Dendritic cell treated with granulocyte-macrophage colony-stimulating factor and Interleukin-4, amounts not matched to agents 40 ng/mL and 50 ng/mL, for 4 days (primary cell): ENCODE measurements at regions of chr14 and their contacts with region 1.

Region 1: DNA sequence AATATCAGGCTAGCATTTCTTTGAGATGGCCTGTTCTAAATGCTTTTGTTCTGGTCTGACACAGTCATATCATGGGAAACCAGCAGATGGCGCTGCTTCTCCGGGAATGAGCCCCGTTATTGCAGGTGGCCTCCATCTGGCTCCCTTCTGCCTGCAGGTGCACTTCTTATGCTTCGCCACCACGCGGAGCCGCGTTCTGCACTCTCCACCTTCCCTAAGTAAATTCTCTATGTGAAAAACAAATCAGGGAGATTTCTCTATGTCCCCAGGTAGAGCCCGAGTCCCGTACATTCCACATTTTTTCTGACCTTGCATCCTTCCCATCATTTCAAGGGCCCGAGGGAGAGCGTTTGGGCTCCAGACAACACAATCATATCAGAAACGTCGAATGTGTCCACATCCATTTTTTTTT is 26.2 kb downstream of the GLRX5 start:
- H3K4me3 Mint-ChIP-seq: no peak overlapping the region
- H3K27ac Mint-ChIP-seq: no peak overlapping the region
- H3K4me1 Mint-ChIP-seq: no peaks in the 10 kb centered on the region
- H3K27me3 Mint-ChIP-seq: peaks cover 12% of the 10 kb centered on the region

Region 2: GRCh38 chr14:95683793-95684192 is 122.8 kb after region 1 on chr14:
- intact Hi-C with region 1: loop called (anchors 5 kb)
- H3K4me3 Mint-ChIP-seq: no peak overlapping the region
- H3K27ac Mint-ChIP-seq: no peak overlapping the region
- H3K4me1 Mint-ChIP-seq: no peaks in the 10 kb centered on the region
- H3K27me3 Mint-ChIP-seq: no peaks in the 10 kb centered on the region

Region 3: GRCh38 chr14:95759941-95760340 is 198.9 kb after region 1 on chr14:
- intact Hi-C with region 1: no loop called
- H3K4me3 Mint-ChIP-seq: no peak overlapping the region
- H3K27ac Mint-ChIP-seq: no peak overlapping the region
- H3K4me1 Mint-ChIP-seq: no peaks in the 10 kb centered on the region
- H3K27me3 Mint-ChIP-seq: peaks cover 4% of the 10 kb centered on the region

Region 4: GRCh38 chr14:95774265-95775160 is 213.5 kb after region 1 on chr14:
- intact Hi-C with region 1: loop called (anchors 1 kb)
- H3K4me3 Mint-ChIP-seq: no peak overlapping the region
- H3K27ac Mint-ChIP-seq: no peak overlapping the region
- H3K4me1 Mint-ChIP-seq: no peaks in the 10 kb centered on the region
- H3K27me3 Mint-ChIP-seq: peaks cover 5% of the 10 kb centered on the region

Region 5: DNA sequence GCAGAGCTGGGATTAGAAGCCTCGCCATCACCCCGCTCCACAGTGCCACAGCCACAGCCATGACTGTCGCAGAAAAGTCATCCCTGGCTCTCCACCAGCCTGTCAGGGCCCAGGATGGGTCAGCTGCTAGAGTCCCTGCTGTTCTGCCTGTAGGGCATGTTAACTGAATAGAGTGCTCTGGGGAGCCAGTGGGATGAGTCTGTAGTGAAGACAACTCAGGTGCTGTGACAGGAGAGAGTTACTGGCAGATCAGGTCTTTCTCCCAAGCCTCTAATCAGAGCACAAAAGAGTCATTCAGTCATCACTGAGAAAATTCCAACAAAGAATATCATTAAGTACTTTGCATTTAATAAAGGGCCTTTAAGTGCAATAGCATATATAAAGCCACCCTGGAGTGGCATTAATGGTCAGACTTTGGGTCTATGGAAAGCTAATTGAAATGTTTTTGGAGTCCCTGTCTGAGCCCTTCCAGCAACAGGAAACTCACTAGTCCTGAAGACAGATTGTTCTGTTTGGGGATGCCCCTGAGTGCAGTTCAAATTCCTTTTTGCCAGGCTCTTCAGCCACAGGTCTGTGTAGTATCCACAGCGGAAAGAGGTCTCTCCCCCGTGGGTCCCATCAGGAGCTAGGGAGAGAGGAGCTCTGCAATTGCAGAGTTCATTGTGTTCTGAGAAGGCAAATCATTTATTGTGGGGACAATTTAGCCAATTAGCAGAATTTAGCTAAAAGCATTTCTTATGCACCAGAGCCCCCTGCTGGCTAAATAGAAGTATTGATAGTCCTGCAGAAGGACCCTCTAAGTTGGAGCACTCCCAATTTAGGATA is 433.0 kb after region 1 on chr14:
- intact Hi-C with region 1: loop called (anchors 2 kb)
- H3K4me3 Mint-ChIP-seq: no peak overlapping the region
- H3K27ac Mint-ChIP-seq: no peak overlapping the region
- H3K4me1 Mint-ChIP-seq: no peaks in the 10 kb centered on the region
- H3K27me3 Mint-ChIP-seq: peaks cover 8% of the 10 kb centered on the region

Region 6: DNA sequence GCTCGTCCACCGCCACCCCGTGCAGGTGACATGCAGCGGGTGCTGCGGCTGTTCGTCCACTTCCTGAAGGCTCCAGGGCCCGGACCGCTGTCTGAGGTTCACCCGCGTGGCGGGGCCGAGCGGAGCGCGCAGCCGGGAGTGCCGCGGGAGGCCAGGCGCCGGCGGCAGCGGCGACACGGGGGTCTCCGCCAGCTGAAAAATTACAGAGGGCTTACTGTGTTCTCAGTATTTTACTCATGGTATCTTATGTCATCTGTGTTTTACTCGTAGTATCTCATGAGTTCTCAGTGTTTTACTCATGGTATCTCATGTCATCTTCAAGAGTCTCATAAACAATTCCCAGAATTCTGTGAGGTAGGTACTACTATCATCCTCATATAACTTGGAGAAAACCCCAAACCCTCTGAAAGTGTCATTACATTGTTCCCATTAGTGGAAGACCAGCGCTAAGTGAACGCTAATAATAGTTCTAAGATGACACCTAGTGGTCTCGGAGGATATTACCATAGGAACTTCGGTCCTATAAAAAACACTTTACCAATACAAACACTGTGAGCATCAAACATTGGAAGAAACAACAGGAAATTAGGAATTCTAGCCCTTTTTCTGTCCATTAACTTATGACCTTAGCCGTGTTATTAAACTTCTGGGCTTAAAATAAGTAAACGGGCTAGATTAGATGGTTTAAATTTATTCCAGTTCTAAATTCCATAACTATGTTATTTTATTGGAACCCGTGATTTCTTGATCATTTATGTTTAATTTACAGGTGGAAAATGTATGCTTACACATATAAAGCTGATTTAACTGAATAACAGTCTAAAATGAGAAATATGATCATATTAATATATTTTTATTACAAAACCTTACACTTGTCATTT is 863.3 kb after region 1 on chr14:
- intact Hi-C with region 1: loop called (anchors 5 kb)
- H3K4me3 Mint-ChIP-seq: peak overlapping the region; percentile 63
- H3K27ac Mint-ChIP-seq: no peak overlapping the region
- H3K4me1 Mint-ChIP-seq: peaks cover 17% of the 10 kb centered on the region
- H3K27me3 Mint-ChIP-seq: peaks cover 5% of the 10 kb centered on the region